CD4-positive, alpha-beta memory T cell (primary cell): ENCODE measurements at regions of chr10 and their contacts with region 1.

Region 1: DNA sequence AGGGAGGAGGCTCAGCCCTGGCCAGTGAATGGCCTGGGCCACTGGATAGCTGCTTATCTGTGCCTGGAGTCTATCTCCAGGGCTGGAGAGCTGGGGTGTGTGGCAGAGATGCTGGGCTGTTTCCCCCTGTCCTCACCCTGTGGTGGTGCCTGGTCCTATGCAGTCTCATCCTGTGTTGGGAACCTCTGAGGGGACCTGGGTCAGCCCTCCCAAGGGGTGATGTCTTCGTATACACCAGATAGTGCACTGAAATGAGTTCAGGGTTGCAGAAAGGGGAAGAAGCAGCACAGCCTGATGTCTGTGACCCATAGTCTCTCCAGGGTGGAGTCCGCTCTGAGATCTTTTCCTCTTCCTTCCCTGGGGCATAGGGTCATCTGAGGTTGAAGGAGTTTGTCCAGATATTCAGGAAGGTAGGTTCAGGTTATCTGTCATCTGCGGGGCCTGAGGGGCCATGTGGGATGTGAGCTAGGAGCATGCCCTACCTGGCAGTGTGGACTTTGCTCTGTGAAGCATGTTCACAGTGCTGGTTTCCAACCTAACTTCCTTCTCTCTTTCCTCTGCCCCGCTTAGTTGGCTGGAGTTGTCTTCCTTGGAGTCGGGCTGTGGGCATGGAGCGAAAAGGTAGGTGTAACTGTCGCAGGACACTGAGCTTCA is 33.4 kb upstream of the SH2D4B start:
- DNase-seq: no peak
- H3K4me3 ChIP-seq: no peak overlapping the region
- H3K4me3 Mint-ChIP-seq: peak overlapping the region in 5 of 8 donors; percentile 7 to 66 (median 47)
- H3K27ac ChIP-seq: peak overlapping the region; percentile 51
- H3K27ac Mint-ChIP-seq: peak overlapping the region; percentile 83 to 94 (median 90)
- H3K4me1 ChIP-seq: peaks cover 69% of the 10 kb centered on the region
- H3K4me1 Mint-ChIP-seq: peaks cover 61 to 79% (median 69%) of the 10 kb centered on the region in 4 donors
- H3K27me3 ChIP-seq: no peaks in the 10 kb centered on the region
- H3K27me3 Mint-ChIP-seq: no peaks in the 10 kb centered on the region

Region 2: GRCh38 chr10:80408242-80409101 is 95.8 kb before region 1 on chr10 and contains the start of gene PRXL2A:
- CTCF ChIA-PET with region 1: interaction called, 14 read pairs
- POLR2A ChIA-PET with region 1: interaction called, 4 read pairs
- intact Hi-C with region 1: no loop called
- DNase-seq: peak; percentile 66 to 72 (median 68)
- H3K4me3 ChIP-seq: peak within 1 kb of the TSS; percentile 26 to 64
- H3K4me3 Mint-ChIP-seq: peak within 1 kb of the TSS; percentile 85 to 95 (median 92)
- H3K27ac ChIP-seq: peak within 1 kb of the TSS; percentile 40
- H3K27ac Mint-ChIP-seq: peak within 1 kb of the TSS in 6 of 7 donors; percentile 30 to 88 (median 67)
- H3K4me1 ChIP-seq: peaks cover 10% of the 10 kb centered on the region
- H3K4me1 Mint-ChIP-seq: peaks cover 1 to 11% (median 8%) of the 10 kb centered on the region in 4 donors
- H3K27me3 ChIP-seq: no peaks in the 10 kb centered on the region
- H3K27me3 Mint-ChIP-seq: peaks cover 2 to 3% of the 10 kb centered on the region in 2 donors
- total RNA-seq, gene PRXL2A: 3.6 to 4.7 TPM

Region 3: DNA sequence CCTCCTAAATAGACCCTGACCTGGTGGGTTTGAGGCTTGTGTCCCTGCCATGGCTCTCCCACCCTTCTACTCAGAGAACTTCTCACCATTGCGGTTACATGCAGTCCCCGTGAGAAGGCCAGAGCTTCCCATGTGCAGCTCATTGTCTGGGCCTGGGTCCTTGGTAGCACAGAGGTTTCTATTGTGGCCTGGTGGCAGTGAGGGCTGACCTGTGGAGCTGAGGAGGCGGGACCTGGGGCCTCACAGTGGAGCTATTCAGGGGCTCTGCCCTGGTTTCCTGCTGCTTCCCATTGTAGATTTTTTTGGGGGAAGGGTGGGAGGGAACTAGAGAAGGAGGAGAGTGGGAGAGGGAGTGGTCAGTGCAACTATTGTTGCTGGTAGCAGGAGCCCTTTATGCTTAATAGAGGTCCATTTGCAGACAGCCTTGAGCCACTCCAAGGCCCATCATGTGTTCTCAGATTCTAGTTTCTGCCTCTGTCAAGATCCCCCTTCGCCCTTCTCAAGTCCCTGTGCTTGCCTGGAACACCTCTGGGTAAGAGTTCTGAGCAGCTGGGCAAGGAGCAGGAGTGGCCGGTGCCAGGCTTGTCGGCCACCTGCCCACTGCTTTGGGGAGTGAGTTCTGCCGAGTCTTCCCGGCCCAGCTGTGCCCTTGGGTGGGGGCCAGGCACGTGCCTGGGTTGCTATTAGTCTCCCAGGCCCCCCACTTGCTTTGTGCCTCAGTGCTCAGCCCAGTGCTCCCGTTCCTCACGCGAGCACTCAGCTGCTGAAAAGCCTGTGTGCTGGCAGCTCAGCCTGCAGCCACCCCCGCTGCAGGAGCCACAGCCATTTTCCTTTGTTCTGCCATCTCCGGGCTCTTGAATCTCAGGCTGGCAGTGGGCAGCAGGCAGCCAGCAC is 39.5 kb before region 1 on chr10:
- CTCF ChIA-PET with region 1: interaction called, 516 read pairs
- POLR2A ChIA-PET with region 1: interaction called, 713 read pairs
- intact Hi-C with region 1: loop called (anchors 1 kb)
- DNase-seq: no peak
- H3K4me3 ChIP-seq: peak overlapping the region; percentile 48 to 58
- H3K4me3 Mint-ChIP-seq: peak overlapping the region; percentile 83 to 100 (median 96)
- H3K27ac ChIP-seq: peak overlapping the region; percentile 83
- H3K27ac Mint-ChIP-seq: peak overlapping the region; percentile 93 to 100 (median 96)
- H3K4me1 ChIP-seq: peaks cover 100% of the 10 kb centered on the region
- H3K4me1 Mint-ChIP-seq: peaks cover 79 to 100% (median 93%) of the 10 kb centered on the region in 4 donors
- H3K27me3 ChIP-seq: no peaks in the 10 kb centered on the region
- H3K27me3 Mint-ChIP-seq: no peaks in the 10 kb centered on the region

Region 4: GRCh38 chr10:80487791-80488538 is 16.3 kb before region 1 on chr10:
- CTCF ChIA-PET with region 1: interaction called, 201 read pairs
- POLR2A ChIA-PET with region 1: interaction called, 202 read pairs
- intact Hi-C with region 1: loop called (anchors 1 kb)
- DNase-seq: peak; percentile 71 to 81 (median 76)
- H3K4me3 ChIP-seq: peak overlapping the region; percentile 4 to 53
- H3K4me3 Mint-ChIP-seq: peak overlapping the region; percentile 70 to 93 (median 83)
- H3K27ac ChIP-seq: peak overlapping the region; percentile 74
- H3K27ac Mint-ChIP-seq: peak overlapping the region; percentile 83 to 97 (median 97)
- H3K4me1 ChIP-seq: peaks cover 100% of the 10 kb centered on the region
- H3K4me1 Mint-ChIP-seq: peaks cover 86 to 100% (median 93%) of the 10 kb centered on the region in 4 donors
- H3K27me3 ChIP-seq: no peaks in the 10 kb centered on the region
- H3K27me3 Mint-ChIP-seq: no peaks in the 10 kb centered on the region

Region 5: GRCh38 chr10:80516506-80517075 is 12.3 kb after region 1 on chr10:
- CTCF ChIA-PET with region 1: interaction called, 31 read pairs
- POLR2A ChIA-PET with region 1: interaction called, 7 read pairs
- intact Hi-C with region 1: no loop called
- DNase-seq: no peak
- H3K4me3 ChIP-seq: no peak overlapping the region
- H3K4me3 Mint-ChIP-seq: no peak overlapping the region
- H3K27ac ChIP-seq: no peak overlapping the region
- H3K27ac Mint-ChIP-seq: peak overlapping the region in 4 of 7 donors; percentile 68 to 78 (median 75)
- H3K4me1 ChIP-seq: no peaks in the 10 kb centered on the region
- H3K4me1 Mint-ChIP-seq: peaks cover 8 to 17% (median 12%) of the 10 kb centered on the region in 4 donors
- H3K27me3 ChIP-seq: no peaks in the 10 kb centered on the region
- H3K27me3 Mint-ChIP-seq: no peaks in the 10 kb centered on the region

Region 6: DNA sequence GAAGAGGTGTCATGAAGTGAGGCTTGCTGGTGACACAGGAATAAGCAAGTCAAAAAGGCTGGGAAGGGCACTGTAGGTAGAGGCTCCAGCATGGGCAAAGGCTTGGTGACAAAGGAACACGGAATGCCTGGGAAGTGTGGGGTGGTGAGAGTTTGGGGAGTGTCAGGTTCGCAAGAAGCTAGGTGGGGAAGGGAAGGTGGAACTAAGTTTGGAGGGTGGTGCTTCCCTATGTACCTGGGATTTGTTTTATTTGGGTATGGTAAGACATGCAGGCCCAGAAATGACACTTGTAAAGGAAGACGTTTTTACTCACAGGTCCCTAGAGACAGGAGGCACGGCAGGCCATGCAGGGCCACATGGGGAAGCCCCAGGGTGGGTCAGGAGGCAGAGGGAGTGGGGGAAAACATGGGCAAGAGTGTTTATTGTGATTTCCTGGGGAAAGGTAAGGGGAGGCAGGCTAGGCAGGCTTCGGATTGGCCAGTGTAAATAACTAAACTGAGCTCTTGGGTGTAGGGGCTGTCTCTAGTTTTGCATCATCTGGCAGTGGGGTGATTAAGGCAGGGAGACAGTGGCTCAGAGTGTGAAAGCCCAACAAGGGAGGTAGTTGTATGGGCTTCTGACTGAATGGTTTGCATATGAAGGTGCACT is 85.6 kb after region 1 on chr10:
- CTCF ChIA-PET with region 1: no interaction called
- POLR2A ChIA-PET with region 1: no interaction called
- intact Hi-C with region 1: no loop called
- DNase-seq: no peak
- H3K4me3 ChIP-seq: no peak overlapping the region
- H3K4me3 Mint-ChIP-seq: no peak overlapping the region
- H3K27ac ChIP-seq: no peak overlapping the region
- H3K27ac Mint-ChIP-seq: no peak overlapping the region
- H3K4me1 ChIP-seq: no peaks in the 10 kb centered on the region
- H3K4me1 Mint-ChIP-seq: no peaks in the 10 kb centered on the region
- H3K27me3 ChIP-seq: no peaks in the 10 kb centered on the region
- H3K27me3 Mint-ChIP-seq: peaks cover 1 to 2% of the 10 kb centered on the region in 2 donors